ENCODE measurements at regions of chr20 and their contacts with region 1.

Region 1: DNA sequence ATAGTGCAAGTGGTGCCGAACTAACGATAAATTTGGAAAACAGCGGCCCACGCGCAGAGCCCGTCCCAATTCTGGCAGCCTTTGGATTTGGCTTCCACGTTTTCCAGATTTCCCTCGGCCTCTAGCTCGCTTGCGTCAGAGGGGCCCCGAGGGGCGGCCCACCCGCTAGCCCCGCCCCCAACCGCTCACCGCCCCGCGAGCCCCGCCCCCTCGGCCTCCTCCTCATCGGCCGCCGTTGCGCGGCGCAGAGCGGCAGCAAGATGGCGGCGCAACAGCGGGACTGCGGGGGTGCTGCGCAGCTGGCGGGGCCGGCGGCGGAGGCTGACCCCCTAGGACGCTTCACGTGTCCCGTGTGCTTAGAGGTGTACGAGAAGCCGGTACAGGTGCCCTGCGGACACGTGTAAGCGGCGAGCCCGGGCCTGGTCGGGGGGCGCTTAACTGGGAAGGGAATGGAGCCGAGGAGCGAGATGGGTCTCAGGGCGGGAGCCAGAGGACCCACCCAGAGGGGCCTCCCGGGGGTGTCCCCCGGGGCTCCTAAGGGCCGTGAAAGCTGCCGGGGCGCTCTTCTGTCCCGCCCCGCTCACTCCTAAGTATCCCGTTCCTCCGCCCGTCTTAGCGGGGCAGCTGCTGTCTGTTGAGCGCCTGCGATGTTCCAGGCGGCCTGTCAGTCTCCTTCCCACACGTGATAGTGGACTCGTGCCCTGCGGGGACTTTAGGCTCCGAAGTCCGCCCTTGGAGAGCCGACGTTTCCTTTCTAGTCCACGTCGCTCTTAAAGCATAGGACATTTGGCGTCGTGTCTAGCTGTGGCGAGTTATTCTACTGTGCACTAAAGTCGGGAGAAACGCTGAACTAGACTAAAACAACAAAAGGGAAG is at the start of gene RNF114:
- DNase-seq: peak; percentile 83
- ATAC-seq: peak; percentile 89
- H3K4me3 ChIP-seq: peak within 1 kb of the TSS; percentile 96 to 99
- H3K27ac ChIP-seq: peak within 1 kb of the TSS; percentile 65
- H3K4me1 ChIP-seq: peaks cover 18 to 27% of the 10 kb centered on the region in 2 experiments
- H3K27me3 ChIP-seq: no peaks in the 10 kb centered on the region
- CTCF ChIP-seq: no peak
- POLR2A ChIP-seq: peak; percentile 58
- RAD21 ChIP-seq: no peak
- total RNA-seq, gene RNF114: 66.8 TPM

Region 2: GRCh38 chr20:49964964-49965780 is 28.8 kb after region 1 on chr20:
- CTCF ChIA-PET with region 1: interaction called, 10 read pairs
- POLR2A ChIA-PET with region 1: no interaction called
- RAD21 ChIA-PET with region 1: no interaction called
- intact Hi-C with region 1: no loop called
- DNase-seq: peak; percentile 54
- ATAC-seq: peak; percentile 97
- H3K4me3 ChIP-seq: no peak overlapping the region
- H3K27ac ChIP-seq: no peak overlapping the region
- H3K4me1 ChIP-seq: peaks cover 6 to 41% of the 10 kb centered on the region in 2 experiments; a peak in 3 of 4 replicates
- H3K27me3 ChIP-seq: no peaks in the 10 kb centered on the region
- CTCF ChIP-seq: peak; percentile 59 to 99 (median 95); a peak in 5 of 6 replicates
- POLR2A ChIP-seq: no peak
- RAD21 ChIP-seq: peak; percentile 43

Measured in HCT116 (cell line).